RWPE1 (cell line): ENCODE measurements at regions of chr15 and their contacts with region 1.

Region 1: GRCh38 chr15:83380682-83381081 is 66.5 kb upstream of the SH3GL3 start:
- DNase-seq: peak; percentile 71
- H3K27ac ChIP-seq: peak overlapping the region; percentile 100
- CTCF ChIP-seq: peak; percentile 72

Region 2: GRCh38 chr15:82789491-82789890 is 591.2 kb before region 1 on chr15:
- CTCF ChIA-PET with region 1: no interaction called
- POLR2A ChIA-PET with region 1: no interaction called
- DNase-seq: no peak
- H3K27ac ChIP-seq: no peak overlapping the region
- CTCF ChIP-seq: no peak

Region 3: DNA sequence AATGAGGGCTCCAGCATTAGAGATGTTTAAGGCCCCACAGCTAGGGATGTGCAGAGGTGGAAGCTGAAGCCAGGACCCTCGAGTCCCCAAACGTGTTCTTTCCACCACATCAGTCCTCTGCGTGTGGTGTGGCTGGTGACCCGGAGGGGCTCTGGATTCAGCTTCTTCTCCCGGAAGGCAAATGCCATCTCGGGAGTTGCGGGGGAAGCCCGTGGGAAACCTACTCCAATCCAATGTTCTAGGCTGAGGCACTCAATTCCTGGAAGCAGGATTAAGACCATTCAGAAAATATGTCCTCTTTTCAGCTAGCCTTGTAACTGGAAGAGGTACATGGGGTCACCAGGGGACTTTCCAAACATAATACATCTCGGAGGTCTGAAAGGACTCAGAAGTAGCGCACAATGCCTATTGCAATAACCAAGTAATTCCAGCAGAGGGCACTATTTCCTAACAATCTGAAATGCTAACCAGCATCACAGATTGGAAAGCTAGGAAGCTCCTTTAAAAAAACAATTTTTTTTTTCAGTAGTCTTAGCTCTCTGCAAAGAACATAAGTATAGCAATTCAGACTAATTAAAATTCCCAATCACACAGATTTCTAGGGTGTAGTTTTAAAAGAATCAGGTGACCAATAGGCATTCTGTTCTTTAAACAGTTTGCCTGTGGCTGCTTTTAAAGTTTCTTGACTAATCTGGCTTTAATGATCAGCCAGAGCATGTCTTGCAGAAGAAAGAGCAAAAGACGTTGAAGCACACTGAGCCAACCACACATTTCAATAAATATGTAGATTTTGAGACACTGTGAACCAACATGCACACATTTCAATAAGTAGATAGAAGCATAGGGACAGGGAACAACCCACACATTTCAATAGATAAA is 132.3 kb before region 1 on chr15:
- CTCF ChIA-PET with region 1: interaction called, 22 read pairs
- POLR2A ChIA-PET with region 1: no interaction called
- DNase-seq: peak; percentile 39
- H3K27ac ChIP-seq: no peak overlapping the region
- CTCF ChIP-seq: peak; percentile 97

Region 4: DNA sequence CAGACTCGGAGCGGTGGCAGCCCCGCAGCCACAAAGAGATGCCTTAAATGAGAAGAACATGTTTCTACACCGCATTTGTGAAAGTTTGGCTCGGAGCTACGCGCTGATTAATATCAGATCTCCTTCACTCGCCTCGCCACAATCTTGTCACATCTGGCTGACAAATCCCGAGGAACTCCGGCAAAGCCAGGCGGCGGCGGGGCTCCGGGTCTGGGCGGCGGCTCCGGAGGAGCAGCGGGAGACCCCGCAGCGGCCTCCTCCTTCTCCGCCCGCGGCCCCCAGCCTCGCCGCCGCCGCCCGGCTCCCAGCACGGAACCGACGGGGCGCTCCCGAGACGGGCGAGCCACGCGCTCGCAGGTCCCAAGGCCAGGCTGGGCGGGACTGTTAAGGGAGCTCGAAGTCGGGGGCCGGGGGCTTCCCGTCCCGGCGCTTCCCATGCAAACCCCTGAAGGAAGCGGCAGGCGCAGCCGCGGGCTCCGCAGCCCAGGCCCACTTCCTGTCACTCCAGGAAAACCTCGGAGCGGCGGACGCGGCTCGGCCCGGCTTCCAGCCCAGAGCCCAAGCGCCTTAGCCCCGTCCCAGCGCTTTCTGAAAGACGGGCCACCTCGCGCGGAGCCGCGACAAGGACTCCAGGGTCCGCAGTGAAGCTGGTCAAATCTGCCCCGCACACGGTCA is 97.4 kb before region 1 on chr15:
- CTCF ChIA-PET with region 1: interaction called, 11 read pairs
- POLR2A ChIA-PET with region 1: interaction called, 3 read pairs
- DNase-seq: peak; percentile 36
- H3K27ac ChIP-seq: peak overlapping the region; percentile 98
- CTCF ChIP-seq: no peak

Region 5: GRCh38 chr15:83365370-83365938 is 15.2 kb before region 1 on chr15:
- CTCF ChIA-PET with region 1: no interaction called
- POLR2A ChIA-PET with region 1: no interaction called
- DNase-seq: peak; percentile 76
- H3K27ac ChIP-seq: peak overlapping the region; percentile 94
- CTCF ChIP-seq: no peak

Region 6: DNA sequence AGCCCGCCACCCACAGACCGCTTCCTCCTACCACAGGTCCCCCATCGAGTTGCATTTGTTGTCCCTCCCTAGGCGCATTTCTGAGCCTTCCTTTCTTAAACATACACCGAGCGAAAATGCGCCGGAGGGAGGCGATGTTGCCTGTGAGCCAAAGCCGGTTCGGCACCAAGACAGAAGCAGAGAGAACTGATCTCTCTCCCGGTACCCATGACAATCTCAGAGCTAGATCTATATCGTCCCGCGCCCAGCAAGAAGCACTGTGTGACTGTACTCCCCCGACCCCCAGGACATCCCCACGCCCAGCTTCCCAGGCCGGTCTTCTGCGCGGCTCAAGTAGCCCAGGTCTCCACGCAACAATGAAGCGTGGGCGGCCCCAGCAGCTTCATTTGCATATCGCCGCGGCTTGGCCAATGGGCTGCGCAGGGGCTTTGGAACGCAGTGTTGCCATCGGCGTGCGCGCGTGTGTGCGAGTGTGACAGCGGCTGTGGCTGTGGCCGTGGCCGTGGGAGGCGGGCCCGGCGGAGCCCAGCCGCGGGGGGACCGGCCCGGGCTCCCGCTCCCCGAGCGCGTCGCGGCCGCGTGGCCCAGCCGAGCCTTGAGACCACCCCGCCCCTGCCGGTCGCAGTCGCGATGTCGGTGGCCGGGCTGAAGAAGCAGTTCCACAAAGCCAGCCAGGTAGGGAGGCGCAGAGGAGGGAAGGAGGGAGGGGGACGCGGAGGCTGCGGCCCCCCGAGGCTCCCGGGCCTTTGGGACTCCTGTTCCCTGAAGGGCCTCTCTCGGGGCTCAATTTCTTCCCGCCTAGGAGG is 66.4 kb after region 1 on chr15 and contains the start of gene SH3GL3:
- CTCF ChIA-PET with region 1: no interaction called
- POLR2A ChIA-PET with region 1: no interaction called
- DNase-seq: peak; percentile 77
- H3K27ac ChIP-seq: peak within 1 kb of the TSS; percentile 53
- CTCF ChIP-seq: peak; percentile 83

Region 7: GRCh38 chr15:83571820-83572707 is 191.4 kb after region 1 on chr15:
- CTCF ChIA-PET with region 1: no interaction called
- POLR2A ChIA-PET with region 1: no interaction called
- DNase-seq: peak; percentile 48
- H3K27ac ChIP-seq: no peak overlapping the region
- CTCF ChIP-seq: peak; percentile 83